A549 (cell line): ENCODE measurements at regions of chr5 and their contacts with region 1.

Region 1: DNA sequence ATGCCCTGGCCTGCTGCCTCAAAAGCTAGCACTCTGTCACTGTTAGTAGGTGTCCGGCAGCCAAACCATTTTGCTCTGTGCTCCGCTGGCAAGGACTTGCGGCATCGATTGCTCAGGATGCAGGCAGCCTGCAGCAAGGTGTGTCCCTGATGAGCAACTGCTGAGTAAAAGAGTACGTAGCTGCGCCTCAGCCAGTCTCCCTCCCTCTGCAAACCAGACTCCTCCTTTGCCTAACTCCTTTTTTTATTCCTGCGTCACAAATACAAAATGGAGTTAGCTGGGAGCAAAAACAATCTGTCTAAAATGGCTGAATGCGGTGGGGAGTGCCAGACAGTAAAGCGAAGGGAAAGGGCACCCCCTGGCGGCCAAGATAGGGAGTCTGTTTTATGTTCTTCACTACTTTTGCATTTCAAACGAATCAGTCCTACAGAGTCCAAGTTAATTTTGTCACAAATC is 61.1 kb downstream of the DIAPH1 start:
- DNase-seq: peak; percentile 31 to 83
- ATAC-seq: peak; percentile 84 to 91
- H3K4me3 ChIP-seq: no peak overlapping the region
- H3K27ac ChIP-seq: peak overlapping the region in 1 of 2 experiments; percentile 65; a peak in 2 of 6 replicates
- H3K4me1 ChIP-seq: no peaks in the 10 kb centered on the region
- CTCF ChIP-seq: peak; percentile 78
- EP300 ChIP-seq: no peak
- POLR2A ChIP-seq: no peak
- RAD21 ChIP-seq: peak; percentile 81 to 85

Region 2: GRCh38 chr5:141320225-141321169 is 237.2 kb before region 1 on chr5 and contains the start of gene TAF7:
- CTCF ChIA-PET with region 1: interaction called, 10 read pairs
- POLR2A ChIA-PET with region 1: no interaction called
- DNase-seq: peak; percentile 75 to 96
- ATAC-seq: peak; percentile 97 to 98
- H3K4me3 ChIP-seq: peak within 1 kb of the TSS; percentile 68
- H3K27ac ChIP-seq: peak within 1 kb of the TSS; percentile 84 to 93
- H3K4me1 ChIP-seq: no peaks in the 10 kb centered on the region
- CTCF ChIP-seq: peak; percentile 78
- EP300 ChIP-seq: no peak
- POLR2A ChIP-seq: peak; percentile 79
- RAD21 ChIP-seq: no peak; a peak in 1 of 5 replicates
- polyA plus RNA-seq, gene TAF7: 78.1 and 90.6 TPM in 2 replicates

Region 3: DNA sequence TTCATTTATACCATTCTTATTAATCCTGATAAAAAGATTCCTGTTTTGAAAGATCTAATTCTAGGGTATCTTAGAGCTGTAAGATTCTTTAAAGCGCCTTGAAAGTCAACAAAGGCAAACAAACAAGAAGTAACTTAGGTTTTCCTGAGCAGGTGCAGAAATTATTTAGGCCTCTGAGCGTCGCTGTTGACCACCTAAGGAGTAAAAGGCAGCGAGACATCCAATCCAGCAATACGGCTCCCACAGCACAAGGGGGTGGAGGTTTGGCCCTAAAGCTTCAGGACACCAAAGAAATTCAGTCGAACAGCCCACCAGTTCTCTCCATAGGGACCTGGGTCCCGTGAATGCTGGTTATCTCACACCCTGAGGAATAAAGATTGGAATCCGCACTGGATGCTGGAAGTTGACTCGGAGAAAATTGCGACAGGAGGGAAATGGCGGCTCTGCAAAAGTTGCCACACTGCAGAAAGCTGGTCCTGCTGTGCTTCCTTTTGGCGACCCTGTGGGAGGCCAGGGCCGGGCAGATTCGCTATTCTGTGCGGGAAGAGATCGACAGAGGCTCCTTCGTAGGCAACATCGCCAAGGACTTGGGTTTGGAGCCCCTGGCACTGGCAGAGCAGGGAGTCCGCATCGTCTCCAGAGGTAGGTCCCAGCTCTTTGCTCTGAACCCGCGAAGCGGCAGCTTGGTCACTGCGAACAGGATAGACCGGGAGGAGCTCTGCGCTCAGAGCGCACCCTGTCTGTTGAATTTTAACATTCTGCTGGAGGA is 219.0 kb before region 1 on chr5 and contains the start of gene PCDHGA2:
- CTCF ChIA-PET with region 1: interaction called, 18 read pairs
- POLR2A ChIA-PET with region 1: no interaction called
- DNase-seq: peak; percentile 24 to 74
- ATAC-seq: peak; percentile 54 to 87; a peak in 4 of 6 replicates
- H3K4me3 ChIP-seq: peak within 1 kb of the TSS; percentile 45
- H3K27ac ChIP-seq: peak within 1 kb of the TSS; percentile 59 to 70
- H3K4me1 ChIP-seq: no peaks in the 10 kb centered on the region
- CTCF ChIP-seq: peak; percentile 35; the same call in 2 of the 3 replicates
- EP300 ChIP-seq: no peak
- POLR2A ChIP-seq: no peak
- RAD21 ChIP-seq: peak; percentile 46 to 53; a peak in 4 of 5 replicates
- polyA plus RNA-seq, gene PCDHGA2: 1.6 and 1.7 TPM in 2 replicates

Region 4: DNA sequence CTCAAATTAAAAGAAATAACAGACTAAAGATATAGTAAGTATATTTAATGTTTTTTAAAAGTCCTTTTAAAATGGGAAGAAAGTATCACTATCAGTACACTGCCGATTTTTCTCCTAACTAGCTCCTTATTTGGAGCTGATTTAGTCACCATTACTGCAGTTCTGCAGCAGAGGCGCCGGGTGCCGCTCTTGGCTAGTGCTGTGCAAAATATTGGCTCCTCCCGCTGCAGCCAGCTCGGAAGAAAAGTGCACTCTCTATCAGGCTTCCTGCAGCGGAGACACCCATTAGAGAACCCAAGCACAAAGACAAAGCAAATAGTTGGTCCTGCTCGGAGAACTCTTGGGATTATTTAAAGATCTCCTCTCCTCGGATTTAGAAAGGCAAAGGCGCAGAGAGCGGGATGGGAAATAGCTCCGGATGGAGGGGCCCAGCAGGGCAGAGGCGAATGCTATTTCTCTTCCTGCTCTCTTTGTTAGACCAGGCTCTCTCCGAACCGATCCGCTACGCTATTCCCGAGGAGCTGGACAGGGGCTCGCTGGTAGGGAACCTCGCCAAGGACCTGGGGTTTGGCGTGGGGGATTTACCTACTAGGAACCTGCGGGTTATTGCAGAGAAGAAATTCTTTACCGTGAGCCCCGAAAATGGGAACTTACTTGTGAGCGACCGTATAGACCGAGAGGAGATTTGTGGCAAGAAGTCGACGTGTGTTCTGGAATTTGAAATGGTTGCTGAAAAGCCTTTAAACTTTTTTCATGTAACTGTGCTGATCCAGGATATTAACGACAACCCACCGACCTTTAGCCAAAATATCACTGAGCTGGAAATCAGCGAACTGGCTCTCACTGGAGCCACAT is 187.5 kb before region 1 on chr5 and contains the start of gene PCDHGB3:
- CTCF ChIA-PET with region 1: interaction called, 19 read pairs
- POLR2A ChIA-PET with region 1: no interaction called
- DNase-seq: peak in 1 of 2 experiments; percentile 55
- ATAC-seq: peak; percentile 90 to 96
- H3K4me3 ChIP-seq: peak within 1 kb of the TSS; percentile 29
- H3K27ac ChIP-seq: peak within 1 kb of the TSS; percentile 2 to 54; a peak in 2 of 6 replicates
- H3K4me1 ChIP-seq: no peaks in the 10 kb centered on the region
- CTCF ChIP-seq: peak; percentile 28; the same call in 2 of the 3 replicates
- EP300 ChIP-seq: no peak
- POLR2A ChIP-seq: no peak
- RAD21 ChIP-seq: peak; percentile 50 to 52
- polyA plus RNA-seq, gene PCDHGB3: 1.1 and 1.2 TPM in 2 replicates

Region 5: DNA sequence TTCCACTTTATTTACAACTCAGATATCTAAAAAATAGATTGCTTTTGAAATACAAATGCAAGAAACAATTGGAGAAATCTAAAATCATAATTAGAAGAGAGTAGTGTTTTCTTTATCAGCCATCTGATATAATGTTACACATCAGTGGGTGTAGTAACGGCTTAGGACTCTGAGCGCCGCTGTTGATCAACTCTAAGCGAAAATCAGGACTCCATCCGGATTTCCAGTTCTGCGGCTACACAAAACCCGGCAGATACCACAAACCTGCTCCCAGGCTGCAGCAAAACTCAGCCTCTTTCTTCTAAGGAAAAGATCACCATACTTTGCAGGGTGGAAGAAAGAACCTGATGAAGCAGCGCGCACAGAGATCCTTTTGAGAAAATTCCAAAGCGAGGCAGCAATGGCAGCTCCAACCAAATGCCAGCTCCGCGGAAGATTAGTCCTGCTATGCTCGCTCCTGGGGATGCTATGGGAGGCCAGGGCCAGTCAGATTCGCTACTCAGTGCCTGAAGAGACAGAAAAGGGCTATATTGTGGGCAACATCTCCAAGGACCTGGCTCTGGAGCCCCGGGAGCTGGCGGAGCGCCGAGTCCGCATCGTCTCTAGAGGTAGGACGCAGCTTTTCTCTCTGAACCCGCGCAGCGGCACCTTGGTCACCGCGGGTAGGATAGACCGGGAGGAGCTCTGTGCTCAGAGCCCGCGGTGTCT is 155.0 kb before region 1 on chr5 and contains the start of gene PCDHGA9:
- CTCF ChIA-PET with region 1: interaction called, 23 read pairs
- POLR2A ChIA-PET with region 1: no interaction called
- DNase-seq: no peak
- ATAC-seq: no peak
- H3K4me3 ChIP-seq: no peak within 1 kb of the TSS
- H3K27ac ChIP-seq: no peak within 1 kb of the TSS
- H3K4me1 ChIP-seq: no peaks in the 10 kb centered on the region
- CTCF ChIP-seq: no peak
- EP300 ChIP-seq: no peak
- POLR2A ChIP-seq: no peak
- RAD21 ChIP-seq: no peak
- polyA plus RNA-seq, gene PCDHGA9: 0.22 and 0.40 TPM in 2 replicates

Region 6: DNA sequence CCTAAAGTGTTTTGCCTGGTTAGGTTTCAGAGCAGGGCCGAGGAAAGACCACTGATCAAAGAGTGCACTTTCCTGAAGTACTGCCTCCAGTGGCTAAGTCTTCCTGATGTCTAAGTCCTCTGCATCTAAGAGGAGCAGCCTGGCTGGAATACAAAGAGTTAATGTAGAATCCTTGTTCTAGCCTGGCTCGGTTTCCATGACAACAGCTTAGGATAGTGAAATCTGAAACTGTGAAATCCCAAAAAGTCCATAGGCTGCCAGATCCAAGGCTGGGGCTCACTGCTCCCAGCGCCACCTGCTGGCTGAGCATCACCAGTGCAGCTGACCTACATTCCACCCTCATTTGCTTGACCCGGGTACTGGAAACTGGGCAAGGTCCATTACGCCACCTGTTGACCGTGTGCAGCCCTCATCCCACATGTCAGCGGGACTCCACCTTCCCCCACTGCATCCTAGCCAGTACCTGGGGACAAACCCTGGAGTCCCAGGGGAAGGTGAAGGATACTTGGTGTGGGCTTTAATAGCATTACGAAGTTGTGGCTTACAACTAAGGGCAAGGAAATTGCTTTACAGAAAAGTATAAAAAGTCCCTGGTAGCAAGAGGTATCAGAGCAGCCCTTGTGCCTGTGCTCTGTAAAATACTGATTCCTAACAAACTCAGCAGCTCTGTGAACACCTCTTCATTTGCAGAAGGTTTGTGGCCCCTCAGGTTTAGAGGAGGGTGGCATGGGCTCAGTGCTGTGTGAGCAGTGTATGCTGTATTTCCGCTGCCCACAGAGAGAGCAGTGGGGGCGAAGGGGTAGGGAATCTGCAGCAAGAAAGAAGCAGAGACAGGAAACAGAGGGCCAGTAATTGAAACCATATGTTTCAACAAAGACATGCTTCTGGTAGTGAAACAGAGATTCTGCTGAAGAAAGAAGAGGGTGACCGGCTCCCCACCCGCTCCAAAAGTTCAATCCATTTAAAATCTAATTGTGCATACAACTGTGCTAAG is 32.8 kb before region 1 on chr5:
- CTCF ChIA-PET with region 1: interaction called, 30 read pairs
- POLR2A ChIA-PET with region 1: no interaction called
- DNase-seq: peak; percentile 89 to 92
- ATAC-seq: peak; percentile 92 to 95
- H3K4me3 ChIP-seq: no peak overlapping the region
- H3K27ac ChIP-seq: no peak overlapping the region
- H3K4me1 ChIP-seq: peaks cover 36% of the 10 kb centered on the region
- CTCF ChIP-seq: peak; percentile 99
- EP300 ChIP-seq: no peak
- POLR2A ChIP-seq: no peak
- RAD21 ChIP-seq: peak; percentile 82 to 84

Region 7: DNA sequence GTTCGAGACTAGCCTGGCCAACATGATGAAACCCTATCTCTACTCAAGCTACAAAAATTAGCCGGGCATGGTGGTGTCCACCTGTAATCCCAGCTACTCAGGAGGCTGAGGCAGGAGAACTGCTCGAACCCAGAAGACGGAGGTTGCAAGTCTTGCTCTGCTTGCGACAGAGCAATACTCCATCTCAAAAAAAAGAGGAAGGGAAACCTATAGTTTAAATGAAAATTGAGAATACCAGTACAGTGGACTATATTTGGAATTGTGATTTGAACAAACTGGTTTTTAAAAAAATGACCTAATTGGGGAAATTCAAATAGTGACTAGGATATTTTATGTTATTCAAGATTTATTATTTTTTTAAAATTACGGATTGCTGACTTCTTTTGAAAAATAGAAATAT is 27.9 kb after region 1 on chr5:
- CTCF ChIA-PET with region 1: no interaction called
- POLR2A ChIA-PET with region 1: no interaction called
- DNase-seq: no peak
- ATAC-seq: no peak
- H3K4me3 ChIP-seq: no peak overlapping the region
- H3K27ac ChIP-seq: no peak overlapping the region
- H3K4me1 ChIP-seq: 0 out of 3 replicates have a peak, but pooled peaks cover 6% of the 10 kb centered on the region
- CTCF ChIP-seq: no peak
- EP300 ChIP-seq: no peak
- POLR2A ChIP-seq: no peak
- RAD21 ChIP-seq: no peak